Left ventricle myocardium inferior (tissue), 1 donor: ENCODE measurements at regions of chrX and their contacts with region 1.

Region 1: GRCh38 chrX:84907324-84907968 is 96.2 kb upstream of the APOOL start:
- DNase-seq: no peak
- H3K4me3 ChIP-seq: no peak overlapping the region
- H3K27ac ChIP-seq: no peak overlapping the region
- H3K4me1 ChIP-seq: no peaks in the 10 kb centered on the region
- H3K27me3 ChIP-seq: no peaks in the 10 kb centered on the region
- CTCF ChIP-seq: peak; percentile 29

Region 2: GRCh38 chrX:84729809-84730208 is 177.6 kb before region 1 on chrX:
- intact Hi-C with region 1: loop called (anchors 5 kb)
- DNase-seq: no peak
- H3K4me3 ChIP-seq: no peak overlapping the region
- H3K27ac ChIP-seq: no peak overlapping the region
- H3K4me1 ChIP-seq: no peaks in the 10 kb centered on the region
- H3K27me3 ChIP-seq: no peaks in the 10 kb centered on the region
- CTCF ChIP-seq: peak; percentile 79